ENCODE measurements at regions of chr2 and their contacts with region 1.

Region 1: GRCh38 chr2:215435809-215436704 is at the start of gene FN1:
- DNase-seq: peak; percentile 83
- H3K4me3 ChIP-seq: peak within 1 kb of the TSS; percentile 47 to 68 (median 58)
- H3K27ac ChIP-seq: peak within 1 kb of the TSS; percentile 86 to 94 (median 88)
- H3K4me1 ChIP-seq: peaks cover 0 to 25% (median 10%) of the 10 kb centered on the region in 4 donors
- H3K27me3 ChIP-seq: peaks cover 53% of the 10 kb centered on the region
- CTCF ChIP-seq: no peak
- EP300 ChIP-seq: no peak
- POLR2A ChIP-seq: peak; percentile 66
- total RNA-seq, gene FN1: 169 to 686 (median 215) TPM

Region 2: GRCh38 chr2:215624423-215624829 is 188.4 kb after region 1 on chr2:
- in situ Hi-C with region 1: no loop called
- intact Hi-C with region 1: loop called (anchors 10 kb)
- DNase-seq: peak; percentile 29
- H3K4me3 ChIP-seq: no peak overlapping the region
- H3K27ac ChIP-seq: peak overlapping the region; percentile 67 to 82 (median 77)
- H3K4me1 ChIP-seq: peaks cover 0 to 5% (median 0%) of the 10 kb centered on the region in 4 donors
- H3K27me3 ChIP-seq: no peaks in the 10 kb centered on the region
- CTCF ChIP-seq: peak in 1 of 5 experiments; percentile 19
- EP300 ChIP-seq: peak; percentile 95
- POLR2A ChIP-seq: no peak

Region 3: DNA sequence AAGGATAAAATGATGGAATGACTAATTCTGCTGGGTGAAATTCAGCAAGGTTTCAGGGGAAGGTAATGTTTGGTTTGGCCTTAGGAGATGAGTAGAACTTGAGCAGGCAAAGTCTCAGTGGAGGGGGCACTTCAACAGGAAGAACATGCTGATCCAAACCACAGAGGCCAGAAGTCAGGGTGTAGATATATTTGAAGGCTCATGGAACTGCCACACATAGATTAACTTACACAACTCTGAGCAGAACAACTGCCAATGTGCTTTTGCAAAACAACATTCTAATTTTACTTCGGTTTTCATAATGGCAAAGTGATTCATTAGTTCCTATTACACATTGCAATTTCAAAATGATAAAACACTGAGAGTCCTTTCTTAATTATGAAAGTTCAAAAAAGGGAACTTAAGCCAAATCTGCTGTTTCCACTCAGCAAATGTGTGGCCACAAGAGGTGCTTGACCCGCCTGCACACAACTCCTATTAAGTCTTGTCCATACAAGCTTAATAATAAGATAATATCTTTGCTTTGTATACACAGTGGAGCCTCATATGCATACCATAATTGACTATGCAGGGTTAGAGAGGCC is 292.5 kb after region 1 on chr2:
- in situ Hi-C with region 1: no loop called
- intact Hi-C with region 1: no loop called
- DNase-seq: no peak
- H3K4me3 ChIP-seq: no peak overlapping the region
- H3K27ac ChIP-seq: no peak overlapping the region
- H3K4me1 ChIP-seq: no peaks in the 10 kb centered on the region
- H3K27me3 ChIP-seq: no peaks in the 10 kb centered on the region
- CTCF ChIP-seq: no peak
- EP300 ChIP-seq: no peak
- POLR2A ChIP-seq: no peak

Measured in transverse colon (tissue), 4 donors.